ENCODE measurements at regions of chr20 and their contacts with region 1.

Region 1: GRCh38 chr20:9903048-9903655 is 64.3 kb upstream of the PAK5 start:
- DNase-seq: no peak
- H3K4me3 ChIP-seq: no peak overlapping the region
- H3K27ac ChIP-seq: no peak overlapping the region
- H3K4me1 ChIP-seq: no peaks in the 10 kb centered on the region
- H3K27me3 ChIP-seq: no peaks in the 10 kb centered on the region
- CTCF ChIP-seq: peak; percentile 55 to 69

Region 2: GRCh38 chr20:9877932-9878495 is 25.1 kb before region 1 on chr20:
- CTCF ChIA-PET with region 1: no interaction called
- dilution Hi-C with region 1: no loop called
- in situ Hi-C with region 1: no loop called
- intact Hi-C with region 1: loop called (anchors 1 kb)
- DNase-seq: no peak
- H3K4me3 ChIP-seq: no peak overlapping the region
- H3K27ac ChIP-seq: no peak overlapping the region
- H3K4me1 ChIP-seq: no peaks in the 10 kb centered on the region
- H3K27me3 ChIP-seq: no peaks in the 10 kb centered on the region
- CTCF ChIP-seq: no peak

Measured in mammary epithelial cell (primary cell).